Thyroid gland (tissue), 4 donors: ENCODE measurements at regions of chr10 and their contacts with region 1.

Region 1: GRCh38 chr10:49508249-49508648 is 30.7 kb downstream of the ERCC6 start:
- DNase-seq: no peak
- H3K4me3 ChIP-seq: no peak overlapping the region
- H3K27ac ChIP-seq: no peak overlapping the region
- H3K4me1 ChIP-seq: peaks cover 4% of the 10 kb centered on the region in 2 donors
- H3K27me3 ChIP-seq: no peaks in the 10 kb centered on the region
- CTCF ChIP-seq: no peak
- POLR2A ChIP-seq: no peak

Region 2: GRCh38 chr10:49407552-49408137 is 100.6 kb before region 1 on chr10:
- intact Hi-C with region 1: loop called (anchors 5 kb)
- DNase-seq: peak; percentile 75 to 88
- H3K4me3 ChIP-seq: no peak overlapping the region
- H3K27ac ChIP-seq: no peak overlapping the region
- H3K4me1 ChIP-seq: no peaks in the 10 kb centered on the region
- H3K27me3 ChIP-seq: no peaks in the 10 kb centered on the region
- CTCF ChIP-seq: peak; percentile 41 to 89 (median 78)
- POLR2A ChIP-seq: no peak